ENCODE measurements at regions of chr17 and their contacts with region 1.

Region 1: GRCh38 chr17:74212913-74213791 is at the start of gene TTYH2:
- DNase-seq: peak; percentile 89 to 97
- H3K4me3 ChIP-seq: peak within 1 kb of the TSS; percentile 42
- CTCF ChIP-seq: no peak
- POLR2A ChIP-seq: no peak
- total RNA-seq, gene TTYH2: 4.3 to 12.7 (median 8.6) TPM

Region 2: GRCh38 chr17:73393962-73394361 is 819.2 kb before region 1 on chr17:
- intact Hi-C with region 1: no loop called
- DNase-seq: no peak
- H3K4me3 ChIP-seq: no peak overlapping the region
- CTCF ChIP-seq: no peak
- POLR2A ChIP-seq: no peak

Region 3: DNA sequence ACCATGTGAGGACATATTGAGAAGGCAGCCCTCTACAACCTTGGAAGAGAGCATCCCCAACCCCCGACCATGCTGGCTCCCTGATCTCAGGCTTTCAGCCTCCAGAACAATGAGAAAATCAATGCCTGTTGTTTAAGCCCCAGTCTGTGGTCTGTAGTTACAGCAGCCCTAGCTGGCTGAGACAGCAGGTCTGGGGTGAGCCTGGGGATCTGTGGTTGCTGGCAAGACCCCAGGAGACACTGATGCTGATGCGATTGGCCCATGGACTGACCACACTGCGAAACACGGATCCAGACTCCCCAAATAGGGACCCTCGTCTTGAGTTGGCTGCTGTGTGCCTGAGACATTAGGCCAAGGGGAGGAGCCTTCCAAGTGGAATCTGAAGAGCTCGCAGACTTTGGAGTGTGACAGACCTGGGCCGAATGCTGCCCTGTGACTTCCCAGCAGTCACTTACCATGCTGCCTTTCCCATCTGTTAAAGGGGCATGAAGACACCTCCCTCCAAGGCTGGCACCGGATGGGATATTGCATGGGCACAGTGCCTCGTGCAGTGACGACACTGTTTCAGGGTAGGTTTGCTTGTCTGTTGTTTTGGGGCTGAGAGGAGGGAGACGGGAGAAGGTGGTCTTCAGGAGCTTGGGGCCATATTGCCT is 157.5 kb before region 1 on chr17:
- intact Hi-C with region 1: no loop called
- DNase-seq: no peak
- H3K4me3 ChIP-seq: no peak overlapping the region
- CTCF ChIP-seq: no peak
- POLR2A ChIP-seq: no peak

Region 4: DNA sequence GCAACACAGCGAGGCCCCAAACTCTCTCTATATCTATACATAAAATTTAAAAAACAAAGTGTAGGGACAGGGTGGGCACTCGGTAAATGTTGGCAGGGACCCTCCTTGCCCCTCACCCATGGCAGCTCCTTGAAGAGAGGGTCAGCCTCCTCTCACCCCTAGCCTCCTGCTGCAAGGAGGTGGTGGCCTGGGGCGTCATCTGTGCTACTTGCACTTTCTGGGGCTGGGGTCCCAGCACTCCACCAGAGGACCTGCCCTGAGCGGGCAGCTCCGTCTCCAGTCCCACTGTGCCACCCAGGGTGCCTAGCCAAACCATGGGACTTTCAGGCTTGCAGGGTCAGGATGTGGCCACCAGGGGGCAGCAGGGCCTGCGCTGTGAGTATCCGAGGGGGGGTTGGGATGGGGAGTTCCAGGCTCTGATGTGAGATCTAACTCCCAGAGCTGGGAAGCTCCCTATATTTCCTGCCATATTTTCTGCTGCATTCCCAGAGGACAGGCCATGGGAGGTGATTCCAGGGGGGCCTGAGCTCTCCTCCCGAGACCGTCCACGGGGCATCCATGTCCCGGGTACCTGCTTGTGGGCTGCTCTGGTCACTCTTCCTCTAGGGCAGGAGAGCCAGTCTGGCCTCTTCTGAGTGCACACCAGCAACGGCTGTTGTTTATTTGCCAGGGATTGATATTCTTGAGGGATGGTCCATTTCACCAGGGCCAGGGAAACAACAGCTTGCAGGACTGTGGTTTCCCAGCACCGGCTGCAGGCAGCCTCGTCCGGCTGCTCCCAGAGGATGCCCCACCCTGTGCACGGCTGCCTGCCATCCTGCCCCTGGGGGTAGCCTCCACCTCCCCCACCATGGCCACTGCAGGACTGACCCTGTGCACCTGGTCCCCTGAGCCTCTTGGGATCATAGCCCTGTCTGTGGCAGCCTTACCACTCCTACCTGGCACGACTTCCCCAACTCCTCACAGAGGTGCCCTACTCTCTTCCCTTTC is 155.2 kb after region 1 on chr17:
- intact Hi-C with region 1: loop called (anchors 10 kb)
- DNase-seq: peak; percentile 47 to 93
- H3K4me3 ChIP-seq: no peak overlapping the region
- CTCF ChIP-seq: peak in 1 of 3 donors; percentile 77
- POLR2A ChIP-seq: no peak